H1 (cell line): ENCODE measurements at regions of chr17 and their contacts with region 1.

Region 1: DNA sequence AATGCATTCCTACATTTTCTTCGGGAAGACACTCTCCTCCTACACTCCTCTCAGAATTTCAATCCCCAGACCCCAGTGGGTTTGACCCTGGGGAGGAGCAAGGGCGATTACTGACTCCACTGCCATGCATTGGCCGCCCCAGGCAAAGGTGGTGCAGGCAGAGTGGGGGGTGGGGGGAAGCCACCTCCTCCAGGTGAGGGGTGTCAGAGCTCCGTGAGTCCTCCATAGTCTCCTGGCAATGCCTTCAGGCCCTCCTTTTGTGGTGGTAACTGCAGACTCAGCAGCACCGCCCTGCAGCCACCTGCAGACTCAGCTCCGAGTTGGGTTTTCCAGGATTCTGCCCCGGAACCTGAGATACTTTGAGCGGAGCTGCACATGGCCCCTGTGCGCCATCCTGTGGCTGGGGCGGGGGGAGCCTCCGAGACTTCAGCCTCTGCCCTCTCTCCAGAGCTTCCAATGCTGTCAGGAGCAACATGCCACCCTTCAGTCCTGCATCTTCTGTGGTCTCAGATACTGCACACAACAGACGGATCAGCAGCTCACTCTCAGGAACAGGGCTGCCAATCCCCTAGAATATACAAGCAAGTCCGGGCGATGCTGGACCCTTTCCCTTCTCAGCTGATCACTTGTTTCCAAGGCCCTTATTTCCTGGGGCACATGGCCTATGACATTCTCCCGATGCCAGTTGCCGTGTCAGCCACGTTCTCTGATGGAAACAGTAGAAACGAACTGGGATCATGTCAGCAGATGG is 2.4 kb upstream of the SLC47A2 start:
- DNase-seq: peak in 1 of 2 experiments; percentile 78
- H3K4me3 ChIP-seq: no peak overlapping the region
- H3K27ac ChIP-seq: no peak overlapping the region
- H3K4me1 ChIP-seq: peaks cover 0 to 6% (median 0%) of the 10 kb centered on the region in 4 experiments; a peak in 2 of 7 replicates
- H3K27me3 ChIP-seq: no peaks in the 10 kb centered on the region
- CTCF ChIP-seq: peak; percentile 63 to 79 (median 73)
- EP300 ChIP-seq: no peak
- POLR2A ChIP-seq: no peak
- RAD21 ChIP-seq: peak; percentile 86 to 87

Region 2: DNA sequence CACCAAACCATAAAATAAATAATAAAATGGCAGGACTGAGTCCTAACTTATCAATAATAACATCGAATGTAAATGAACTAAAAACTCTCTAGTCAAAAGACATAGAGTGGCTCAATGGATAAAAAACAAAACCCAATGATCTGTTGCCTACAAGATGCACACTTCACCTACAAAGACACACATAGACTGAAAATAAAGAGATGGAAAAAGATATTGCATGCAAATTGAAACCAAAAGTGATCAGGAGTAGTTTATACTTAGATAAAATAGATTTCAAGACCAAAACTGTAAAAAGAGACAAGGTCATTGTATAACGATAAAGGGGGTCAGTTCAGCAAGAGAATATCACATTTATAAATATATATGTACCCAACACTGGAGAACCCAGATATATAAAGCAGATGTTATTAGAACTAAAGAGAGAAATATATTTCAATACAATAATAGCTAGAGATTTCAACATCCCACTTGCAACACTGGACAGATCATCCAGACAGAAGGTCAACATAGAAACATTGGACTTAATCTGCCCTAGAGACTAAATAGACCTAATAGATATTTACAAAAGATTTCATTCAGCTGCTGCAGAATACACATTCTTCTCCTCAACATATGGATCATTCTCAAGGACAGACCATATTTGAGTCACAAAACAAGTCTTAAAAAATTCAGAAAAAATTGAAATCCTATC is 32.2 kb before region 1 on chr17:
- CTCF ChIA-PET with region 1: no interaction called
- POLR2A ChIA-PET with region 1: no interaction called
- DNase-seq: no peak
- H3K4me3 ChIP-seq: no peak overlapping the region
- H3K27ac ChIP-seq: no peak overlapping the region
- H3K4me1 ChIP-seq: no peaks in the 10 kb centered on the region
- H3K27me3 ChIP-seq: no peaks in the 10 kb centered on the region
- CTCF ChIP-seq: no peak
- EP300 ChIP-seq: no peak
- POLR2A ChIP-seq: no peak
- RAD21 ChIP-seq: no peak

Region 3: DNA sequence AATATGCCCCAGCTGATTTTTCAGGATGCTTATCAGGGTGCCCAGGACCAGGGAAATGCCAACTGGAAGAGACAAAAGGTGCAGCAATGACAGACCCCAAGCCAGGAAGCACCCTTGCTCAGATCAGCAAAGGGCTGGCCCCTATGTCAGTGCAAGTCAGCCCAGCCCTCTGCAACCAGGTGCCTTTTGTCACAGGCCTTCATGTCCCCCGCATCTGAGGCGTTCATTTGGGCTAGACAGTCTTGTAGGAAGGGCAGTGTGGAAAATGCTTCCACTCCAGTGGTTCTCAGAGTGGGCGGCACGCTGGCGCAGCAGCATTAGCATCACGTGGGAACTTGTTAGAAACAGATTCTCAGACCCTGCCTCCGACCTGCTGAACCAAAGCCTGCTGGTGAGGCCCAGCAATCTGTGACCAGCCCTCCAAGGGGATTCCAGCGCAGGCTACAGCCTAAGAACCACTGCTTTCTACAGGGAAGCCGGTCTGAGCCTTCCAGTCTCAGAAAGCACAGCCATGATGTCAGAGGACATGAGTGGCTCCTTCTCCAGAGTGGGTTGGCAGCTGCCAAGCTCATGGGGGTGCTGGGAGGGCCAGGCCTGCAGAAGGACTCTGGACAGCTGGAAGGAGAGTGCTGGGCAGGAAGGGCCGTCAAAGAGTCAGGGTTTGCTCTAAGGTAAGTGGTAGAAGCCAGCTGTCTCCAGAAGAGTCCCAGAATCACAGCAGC is 15.5 kb before region 1 on chr17:
- CTCF ChIA-PET with region 1: interaction called, 11 read pairs
- POLR2A ChIA-PET with region 1: no interaction called
- DNase-seq: no peak
- H3K4me3 ChIP-seq: no peak overlapping the region
- H3K27ac ChIP-seq: no peak overlapping the region
- H3K4me1 ChIP-seq: peaks cover 9 to 31% (median 20%) of the 10 kb centered on the region in 4 experiments
- H3K27me3 ChIP-seq: no peaks in the 10 kb centered on the region
- CTCF ChIP-seq: no peak
- EP300 ChIP-seq: no peak
- POLR2A ChIP-seq: no peak
- RAD21 ChIP-seq: no peak

Region 4: GRCh38 chr17:19744922-19745757 is 26.4 kb after region 1 on chr17:
- CTCF ChIA-PET with region 1: interaction called, 11 read pairs
- POLR2A ChIA-PET with region 1: no interaction called
- DNase-seq: peak; percentile 86 to 100
- H3K4me3 ChIP-seq: peak overlapping the region; percentile 24 to 59 (median 40); a peak in 7 of 8 replicates
- H3K27ac ChIP-seq: no peak overlapping the region
- H3K4me1 ChIP-seq: peaks cover 0 to 9% (median 5%) of the 10 kb centered on the region in 4 experiments; a peak in 5 of 7 replicates
- H3K27me3 ChIP-seq: peaks cover 0 to 6% (median 1%) of the 10 kb centered on the region in 4 experiments; a peak in 4 of 7 replicates
- CTCF ChIP-seq: peak; percentile 92 to 96 (median 94)
- EP300 ChIP-seq: no peak
- POLR2A ChIP-seq: peak in 1 of 2 experiments; percentile 90; a peak in 2 of 3 replicates
- RAD21 ChIP-seq: peak; percentile 64 to 73